ENCODE measurements at regions of chr1 and their contacts with region 1.

Region 1: GRCh38 chr1:179229214-179230140 is at the start of gene ABL2:
- DNase-seq: peak; percentile 73
- ATAC-seq: peak; percentile 72
- H3K4me3 ChIP-seq: peak within 1 kb of the TSS; percentile 62 to 87 (median 85)
- H3K4me3 Mint-ChIP-seq: peak within 1 kb of the TSS; percentile 93
- H3K27ac ChIP-seq: peak within 1 kb of the TSS in 1 of 2 donors; percentile 74
- H3K27ac Mint-ChIP-seq: peak within 1 kb of the TSS; percentile 89
- H3K4me1 ChIP-seq: peaks cover 7 to 13% of the 10 kb centered on the region in 2 donors
- H3K4me1 Mint-ChIP-seq: peaks cover 29% of the 10 kb centered on the region
- H3K27me3 ChIP-seq: no peaks in the 10 kb centered on the region
- H3K27me3 Mint-ChIP-seq: no peaks in the 10 kb centered on the region
- CTCF ChIP-seq: no peak
- total RNA-seq, gene ABL2: 20.0 and 20.7 TPM in 2 replicates

Region 2: DNA sequence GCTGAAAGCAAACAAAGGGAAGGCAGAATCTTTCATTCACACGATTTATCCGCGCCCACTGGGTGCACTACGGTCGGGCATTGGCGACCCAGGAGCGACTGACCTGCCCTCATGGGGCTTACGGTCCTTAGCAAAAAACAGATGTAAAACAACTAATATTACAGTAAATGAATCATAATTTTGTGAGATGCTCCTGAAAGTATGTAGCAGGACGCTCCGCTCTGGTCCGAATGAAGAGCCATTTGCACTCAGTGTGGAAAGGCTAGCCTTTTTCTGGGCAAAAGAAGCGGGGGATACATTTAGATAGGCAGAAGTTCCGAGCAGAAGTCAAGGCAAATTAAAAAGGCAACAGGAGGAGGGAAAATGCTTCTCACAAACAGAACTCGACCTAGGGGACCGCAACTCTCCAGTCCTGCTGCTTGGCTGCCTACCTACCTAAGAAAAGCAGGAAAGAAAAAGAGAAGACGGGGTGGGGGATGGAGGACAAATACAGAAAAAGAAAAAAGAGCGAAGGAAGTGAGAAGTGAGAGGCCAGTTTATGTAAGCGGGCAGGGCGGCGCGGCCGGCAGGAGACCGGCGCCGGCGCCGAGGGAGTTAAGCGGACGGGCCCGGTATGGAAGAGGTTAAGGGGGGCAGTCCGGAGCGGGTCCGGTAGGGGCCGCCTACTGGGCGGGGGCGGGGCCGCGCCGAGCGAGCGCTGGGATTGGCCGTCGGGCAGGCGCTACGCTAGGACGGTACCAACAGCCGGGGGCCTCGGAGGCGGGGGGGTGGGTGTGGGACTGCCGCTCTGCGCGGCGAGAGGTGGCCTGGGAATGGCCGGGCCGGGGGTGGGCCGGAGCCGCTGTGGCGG is 204.1 kb before region 1 on chr1 and contains the start of gene FAM20B:
- CTCF ChIA-PET with region 1: no interaction called
- POLR2A ChIA-PET with region 1: no interaction called
- intact Hi-C with region 1: loop called (anchors 5 kb)
- DNase-seq: peak; percentile 95
- ATAC-seq: peak; percentile 80
- H3K4me3 ChIP-seq: peak within 1 kb of the TSS; percentile 77 to 97 (median 87)
- H3K4me3 Mint-ChIP-seq: peak within 1 kb of the TSS; percentile 97
- H3K27ac ChIP-seq: peak within 1 kb of the TSS; percentile 92 to 95
- H3K27ac Mint-ChIP-seq: peak within 1 kb of the TSS; percentile 95
- H3K4me1 ChIP-seq: peaks cover 29 to 36% of the 10 kb centered on the region in 2 donors
- H3K4me1 Mint-ChIP-seq: peaks cover 45% of the 10 kb centered on the region
- H3K27me3 ChIP-seq: no peaks in the 10 kb centered on the region
- H3K27me3 Mint-ChIP-seq: no peaks in the 10 kb centered on the region
- CTCF ChIP-seq: no peak
- total RNA-seq, gene FAM20B: 28.5 and 32.8 TPM in 2 replicates